Mucosa of descending colon (tissue), 3 donors: ENCODE measurements at regions of chr3 and their contacts with region 1.

Region 1: GRCh38 chr3:9302425-9303181 is 53.2 kb upstream of the SRGAP3 start:
- DNase-seq: peak; percentile 79 to 86 (median 85)
- ATAC-seq: peak; percentile 98
- H3K4me3 ChIP-seq: no peak overlapping the region
- H3K4me1 ChIP-seq: peaks cover 4% of the 10 kb centered on the region
- CTCF ChIP-seq: peak; percentile 87

Region 2: DNA sequence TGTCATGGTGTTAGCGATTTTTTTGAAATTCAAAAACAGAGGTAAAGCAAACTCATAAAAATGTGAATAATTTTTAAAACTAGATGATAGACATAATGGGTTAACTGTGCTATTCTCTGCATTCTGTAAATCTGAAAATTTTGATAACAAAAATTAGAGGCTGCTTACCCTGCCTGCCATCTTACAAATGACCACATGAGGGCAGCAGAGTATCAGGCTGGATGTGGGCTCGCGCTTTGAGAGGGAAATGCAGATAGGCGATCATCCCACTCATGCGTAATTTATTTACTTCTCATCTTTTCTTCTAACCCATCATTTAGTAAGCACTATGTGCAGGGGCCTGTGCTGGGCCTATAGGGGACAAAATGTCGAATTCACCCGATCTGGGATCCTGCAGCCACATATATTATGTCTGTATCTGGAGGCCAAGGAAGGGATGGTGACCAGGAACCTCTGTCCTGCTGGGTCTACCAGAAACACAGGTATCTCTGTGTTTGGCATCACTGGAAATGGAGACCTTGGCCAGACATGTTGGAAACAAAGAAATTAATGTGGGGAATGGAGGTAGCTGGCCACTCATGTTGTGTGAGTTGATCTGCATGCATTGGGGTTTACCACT is 331.5 kb before region 1 on chr3:
- intact Hi-C with region 1: loop called (anchors 5 kb)
- DNase-seq: peak in 2 of 3 donors; percentile 62 to 81
- ATAC-seq: peak; percentile 84
- H3K4me3 ChIP-seq: no peak overlapping the region
- H3K4me1 ChIP-seq: peaks cover 10% of the 10 kb centered on the region
- CTCF ChIP-seq: peak; percentile 91

Region 3: GRCh38 chr3:8987645-8988383 is 314.8 kb before region 1 on chr3:
- intact Hi-C with region 1: loop called (anchors 5 kb)
- DNase-seq: peak in 2 of 3 donors; percentile 72
- ATAC-seq: peak; percentile 77
- H3K4me3 ChIP-seq: no peak overlapping the region
- H3K4me1 ChIP-seq: no peaks in the 10 kb centered on the region
- CTCF ChIP-seq: peak; percentile 63

Region 4: DNA sequence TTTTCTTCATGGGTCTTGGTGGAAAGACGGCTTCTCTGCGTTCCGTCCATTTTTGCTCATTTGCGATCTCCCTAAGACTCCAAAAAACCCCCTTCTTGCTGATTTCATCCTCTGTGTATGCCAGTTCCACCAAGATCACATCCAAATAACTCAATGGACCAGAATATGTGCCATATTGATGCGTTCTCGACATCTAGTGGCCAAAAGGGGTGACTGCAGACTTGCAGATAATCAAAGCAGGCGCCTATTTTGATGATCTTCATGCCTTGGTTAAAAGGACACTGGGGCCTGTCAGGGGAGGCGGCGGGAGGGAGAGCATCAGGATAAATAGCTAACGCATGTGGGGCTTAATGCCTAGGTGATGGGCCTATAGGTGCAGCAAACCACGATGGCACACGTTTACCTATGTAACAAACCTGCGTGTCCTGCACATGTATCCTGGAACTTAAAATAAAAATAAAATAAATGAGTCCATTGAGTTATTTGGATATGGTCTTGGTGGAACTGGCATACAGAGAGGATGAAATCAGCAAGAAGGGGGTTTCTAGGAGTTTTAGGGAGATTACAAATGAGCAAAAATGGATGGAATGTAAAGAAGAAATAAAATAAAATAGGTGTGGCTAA is 235.1 kb before region 1 on chr3:
- intact Hi-C with region 1: loop called in 1 of 2 experiments (anchors 5 kb)
- DNase-seq: peak in 1 of 3 donors; percentile 70
- ATAC-seq: peak; percentile 75
- H3K4me3 ChIP-seq: no peak overlapping the region
- H3K4me1 ChIP-seq: no peaks in the 10 kb centered on the region
- CTCF ChIP-seq: peak; percentile 71